ENCODE measurements at regions of chr17 and their contacts with region 1.

Region 1: DNA sequence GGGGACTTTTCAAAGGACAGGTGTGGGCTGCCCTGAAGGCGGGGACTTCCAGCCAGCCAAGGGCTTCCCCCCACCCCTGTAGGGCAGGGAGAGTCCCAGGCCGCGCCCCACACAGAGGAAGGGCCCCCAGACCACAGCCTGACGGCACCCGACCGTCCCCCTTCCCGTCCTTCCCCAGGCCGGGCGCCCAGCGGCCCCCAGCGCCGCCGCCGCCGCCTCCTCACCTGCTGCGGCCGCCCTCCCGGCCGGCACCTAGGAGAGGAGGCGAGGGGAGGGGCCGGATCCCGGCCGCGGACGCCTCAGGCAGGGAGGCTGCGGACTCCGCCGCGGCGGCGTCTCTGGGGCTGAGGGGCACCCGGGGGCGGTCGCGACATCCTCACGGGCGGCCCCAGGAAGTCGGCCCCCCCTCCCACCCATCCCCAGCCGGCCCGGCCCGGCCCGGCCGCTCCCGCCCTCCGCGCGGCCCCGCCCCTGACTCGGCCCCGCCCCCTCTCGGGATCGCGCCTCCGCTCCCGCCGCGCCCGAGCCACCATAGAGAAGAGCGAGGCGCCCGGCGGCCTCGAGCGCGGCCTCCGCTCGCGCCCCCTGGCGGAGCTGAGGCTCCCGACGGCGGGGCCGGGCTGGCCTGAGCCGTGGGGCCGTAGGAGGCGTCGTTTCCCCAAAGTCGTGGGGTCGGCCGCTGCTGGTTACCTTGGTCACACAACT is 25.5 kb upstream of the RFFL start:
- DNase-seq: no peak
- H3K4me3 ChIP-seq: peak overlapping the region; percentile 80
- CTCF ChIP-seq: peak; percentile 86

Region 2: GRCh38 chr17:34993031-34993430 is 96.0 kb before region 1 on chr17:
- CTCF ChIA-PET with region 1: interaction called, 83 read pairs
- POLR2A ChIA-PET with region 1: no interaction called
- DNase-seq: no peak
- H3K4me3 ChIP-seq: no peak overlapping the region
- CTCF ChIP-seq: no peak

Region 3: GRCh38 chr17:35022536-35023063 is 66.4 kb before region 1 on chr17:
- CTCF ChIA-PET with region 1: interaction called, 20 read pairs
- POLR2A ChIA-PET with region 1: interaction called, 3 read pairs
- DNase-seq: peak; percentile 74
- H3K4me3 ChIP-seq: no peak overlapping the region
- CTCF ChIP-seq: peak; percentile 45

Region 4: DNA sequence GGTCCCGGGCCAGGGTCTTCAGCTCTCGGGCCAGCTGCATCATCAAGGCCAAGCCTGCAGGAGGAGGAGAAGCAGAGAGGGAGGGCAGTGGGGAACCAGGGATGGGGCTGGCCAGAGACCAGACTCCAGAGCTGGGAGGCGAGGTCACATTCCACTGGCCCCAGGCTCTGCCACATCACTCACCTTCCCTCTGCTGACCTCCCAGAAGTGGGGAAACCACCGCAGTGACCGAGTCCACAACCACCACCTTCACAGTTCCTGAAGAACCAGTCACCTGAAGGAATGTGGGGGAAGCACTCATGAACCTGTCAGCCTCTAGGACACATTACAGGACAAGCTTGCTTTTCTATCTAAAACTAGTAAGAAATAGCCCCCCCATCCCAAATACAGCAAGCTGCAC is 14.2 kb after region 1 on chr17:
- CTCF ChIA-PET with region 1: interaction called, 22 read pairs
- POLR2A ChIA-PET with region 1: no interaction called
- DNase-seq: no peak
- H3K4me3 ChIP-seq: no peak overlapping the region
- CTCF ChIP-seq: no peak

Measured in AG04449 (cell line).